Activated naive CD4-positive, alpha-beta T cell treated with anti-CD3 and anti-CD28 coated beads, Interleukin-2, amount 10 ng/mL, durations not matched to agents 7 days and 5 days (primary cell): ENCODE measurements at regions of chr11 and their contacts with region 1.

Region 1: DNA sequence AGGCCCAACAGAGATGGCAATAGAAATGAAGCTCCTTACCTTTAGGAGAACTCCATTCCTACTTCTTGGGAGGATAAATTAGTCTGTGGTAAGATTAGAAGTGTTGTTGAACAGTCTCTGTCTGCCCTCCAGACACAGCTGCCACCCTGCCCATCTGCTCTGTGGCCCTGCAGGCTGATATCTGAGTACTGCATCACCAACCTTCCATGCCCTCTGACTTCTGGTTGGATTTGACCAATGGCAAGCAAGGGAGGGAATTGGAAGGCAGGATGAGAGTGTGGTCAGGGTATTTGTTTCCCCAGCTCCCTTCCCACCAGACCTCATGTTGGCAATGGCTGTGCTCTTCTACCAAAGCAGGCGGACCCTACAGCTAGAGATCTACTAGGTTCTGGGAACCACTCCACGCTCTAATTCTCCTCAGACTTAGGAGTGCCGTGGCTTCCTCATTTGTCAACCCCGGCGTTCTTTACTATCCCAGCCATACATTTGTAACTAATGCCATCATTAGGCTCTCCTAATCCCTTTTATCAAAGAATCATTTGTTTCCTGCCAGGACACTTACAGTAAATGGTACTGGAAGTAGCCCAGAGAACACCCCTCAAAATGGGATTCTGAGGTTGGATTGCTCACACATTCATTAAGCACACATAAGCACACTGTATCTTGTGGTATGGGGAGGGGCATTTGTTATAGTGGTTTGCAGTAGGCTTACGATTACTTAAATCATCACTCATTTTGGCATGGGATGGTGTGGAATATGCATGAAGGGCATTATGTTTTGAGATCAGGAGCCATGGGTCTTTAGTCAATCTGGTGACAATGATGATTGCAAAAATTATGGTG is 35.4 kb upstream of the CD44 start:
- DNase-seq: no peak
- H3K4me3 Mint-ChIP-seq: no peak overlapping the region
- H3K27ac Mint-ChIP-seq: no peak overlapping the region
- H3K4me1 Mint-ChIP-seq: peaks cover 28% of the 10 kb centered on the region
- H3K27me3 Mint-ChIP-seq: peaks cover 8% of the 10 kb centered on the region

Region 2: GRCh38 chr11:35082321-35083182 is 21.0 kb before region 1 on chr11:
- CTCF ChIA-PET with region 1: no interaction called
- DNase-seq: peak; percentile 92
- H3K4me3 Mint-ChIP-seq: peak overlapping the region; percentile 77
- H3K27ac Mint-ChIP-seq: peak overlapping the region; percentile 97
- H3K4me1 Mint-ChIP-seq: peaks cover 92% of the 10 kb centered on the region
- H3K27me3 Mint-ChIP-seq: no peaks in the 10 kb centered on the region

Region 3: DNA sequence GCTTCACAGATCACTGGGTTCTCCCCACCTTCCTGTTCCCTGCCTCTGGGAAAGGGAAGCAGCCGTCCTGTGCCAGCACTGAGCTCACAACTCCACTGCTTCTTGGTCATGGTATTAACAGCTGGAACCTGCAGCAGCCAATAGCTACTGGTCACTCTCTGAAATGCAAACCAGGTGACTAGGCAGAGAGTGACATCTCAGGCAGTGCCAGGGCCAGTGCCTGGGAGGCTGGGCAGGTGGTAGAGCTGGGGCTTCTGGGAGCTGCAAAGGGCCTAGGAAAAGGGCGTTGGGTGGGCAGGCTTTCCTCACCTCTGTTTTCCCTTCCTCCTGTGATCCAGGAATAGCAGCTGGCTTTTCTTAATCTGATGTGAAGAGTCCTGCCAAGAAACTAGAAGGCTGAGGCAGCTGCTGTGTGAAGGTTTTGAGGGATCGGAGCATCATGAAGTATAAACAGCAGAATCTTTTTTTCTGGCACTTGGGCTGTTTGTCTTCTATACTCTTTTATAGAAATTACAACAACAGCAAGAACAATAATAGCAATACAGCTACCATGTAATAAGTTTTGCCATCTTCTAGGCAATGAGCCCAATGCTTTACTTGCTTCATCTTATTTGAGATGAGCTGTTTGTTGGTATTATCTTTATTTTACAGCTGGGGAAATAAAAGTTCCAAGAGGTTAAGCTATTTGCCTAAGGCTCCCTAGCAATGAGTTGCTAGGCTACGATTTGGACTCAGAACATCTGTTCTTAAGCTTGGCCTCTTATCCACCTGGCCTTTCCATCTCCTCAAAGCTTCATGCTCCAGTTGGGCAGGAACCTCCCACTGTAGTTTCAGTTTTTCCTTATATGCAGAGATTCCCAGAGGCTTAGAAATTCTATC is 13.4 kb after region 1 on chr11:
- CTCF ChIA-PET with region 1: interaction called, 11 read pairs
- DNase-seq: no peak
- H3K4me3 Mint-ChIP-seq: no peak overlapping the region
- H3K27ac Mint-ChIP-seq: no peak overlapping the region
- H3K4me1 Mint-ChIP-seq: peaks cover 24% of the 10 kb centered on the region
- H3K27me3 Mint-ChIP-seq: peaks cover 44% of the 10 kb centered on the region

Region 4: DNA sequence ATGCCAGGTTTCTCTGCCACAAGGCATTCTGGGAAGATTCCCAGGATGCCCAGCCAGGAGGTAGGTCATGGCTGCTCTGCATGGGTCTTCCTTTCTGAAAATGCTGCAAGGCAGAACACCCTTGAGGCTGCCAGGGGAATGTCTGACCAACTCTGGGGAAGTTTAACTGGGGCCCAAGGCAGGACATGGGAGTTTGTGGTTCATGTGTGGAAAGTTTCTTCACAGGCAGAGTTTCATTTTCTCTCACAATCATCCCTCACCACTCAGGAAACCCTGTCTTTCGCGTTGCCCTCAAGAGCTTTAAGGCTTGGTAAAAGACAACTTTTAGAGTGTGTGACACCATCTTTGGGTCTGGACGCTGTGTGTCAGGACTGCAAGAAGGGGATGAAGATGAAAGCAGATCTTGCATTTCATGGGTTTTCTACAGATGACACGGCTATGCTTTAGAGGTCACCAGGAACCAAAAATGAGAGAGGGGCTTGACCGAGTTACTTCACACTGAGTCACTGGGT is 168.9 kb after region 1 on chr11:
- CTCF ChIA-PET with region 1: no interaction called
- DNase-seq: peak; percentile 56
- H3K4me3 Mint-ChIP-seq: no peak overlapping the region
- H3K27ac Mint-ChIP-seq: peak overlapping the region; percentile 78
- H3K4me1 Mint-ChIP-seq: peaks cover 27% of the 10 kb centered on the region
- H3K27me3 Mint-ChIP-seq: no peaks in the 10 kb centered on the region